ENCODE measurements at regions of chr16 and their contacts with region 1.

Region 1: GRCh38 chr16:71610936-71611871 is 14.8 kb upstream of the MARVELD3 start:
- DNase-seq: peak; percentile 28 to 79
- H3K4me3 ChIP-seq: peak overlapping the region in 1 of 3 donors; percentile 6
- H3K27ac ChIP-seq: no peak overlapping the region
- H3K4me1 ChIP-seq: no peaks in the 10 kb centered on the region
- H3K27me3 ChIP-seq: no peaks in the 10 kb centered on the region
- CTCF ChIP-seq: peak; percentile 46 to 83 (median 82)
- POLR2A ChIP-seq: no peak

Region 2: GRCh38 chr16:71412270-71413160 is 198.7 kb before region 1 on chr16:
- intact Hi-C with region 1: loop called (anchors 10 kb)
- DNase-seq: peak; percentile 41 to 65
- H3K4me3 ChIP-seq: peak overlapping the region in 1 of 3 donors; percentile 23
- H3K27ac ChIP-seq: no peak overlapping the region
- H3K4me1 ChIP-seq: no peaks in the 10 kb centered on the region
- H3K27me3 ChIP-seq: peaks cover 0 to 6% of the 10 kb centered on the region in 2 donors
- CTCF ChIP-seq: peak; percentile 83 to 88 (median 86)
- POLR2A ChIP-seq: no peak

Region 3: DNA sequence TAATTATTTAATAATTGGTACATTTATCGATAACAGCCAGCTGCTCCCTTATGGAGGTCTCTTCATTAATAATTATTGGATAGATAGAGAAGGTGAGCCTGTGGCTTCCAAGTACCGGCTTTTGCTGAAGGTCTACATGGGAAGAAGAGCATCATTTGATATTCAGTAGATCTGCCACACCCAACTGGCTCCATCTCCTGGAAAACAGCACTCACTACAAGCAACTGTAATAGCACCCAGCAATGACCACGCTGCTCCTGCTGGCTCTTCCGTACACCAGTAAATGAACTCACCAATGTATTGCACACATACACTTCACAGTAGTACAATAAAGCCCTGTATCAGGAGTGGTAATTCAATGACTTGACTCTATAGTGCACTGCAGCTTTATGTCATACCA is 34.2 kb after region 1 on chr16:
- intact Hi-C with region 1: no loop called
- DNase-seq: no peak
- H3K4me3 ChIP-seq: no peak overlapping the region
- H3K27ac ChIP-seq: no peak overlapping the region
- H3K4me1 ChIP-seq: no peaks in the 10 kb centered on the region
- H3K27me3 ChIP-seq: no peaks in the 10 kb centered on the region
- CTCF ChIP-seq: peak in 2 of 3 donors; percentile 15 to 25
- POLR2A ChIP-seq: no peak

Region 4: GRCh38 chr16:71693164-71693563 is 82.0 kb after region 1 on chr16:
- intact Hi-C with region 1: no loop called
- DNase-seq: no peak
- H3K4me3 ChIP-seq: no peak overlapping the region
- H3K27ac ChIP-seq: no peak overlapping the region
- H3K4me1 ChIP-seq: no peaks in the 10 kb centered on the region
- H3K27me3 ChIP-seq: no peaks in the 10 kb centered on the region
- CTCF ChIP-seq: no peak
- POLR2A ChIP-seq: no peak